MCF 10A (cell line): ENCODE measurements at regions of chr16 and their contacts with region 1.

Region 1: DNA sequence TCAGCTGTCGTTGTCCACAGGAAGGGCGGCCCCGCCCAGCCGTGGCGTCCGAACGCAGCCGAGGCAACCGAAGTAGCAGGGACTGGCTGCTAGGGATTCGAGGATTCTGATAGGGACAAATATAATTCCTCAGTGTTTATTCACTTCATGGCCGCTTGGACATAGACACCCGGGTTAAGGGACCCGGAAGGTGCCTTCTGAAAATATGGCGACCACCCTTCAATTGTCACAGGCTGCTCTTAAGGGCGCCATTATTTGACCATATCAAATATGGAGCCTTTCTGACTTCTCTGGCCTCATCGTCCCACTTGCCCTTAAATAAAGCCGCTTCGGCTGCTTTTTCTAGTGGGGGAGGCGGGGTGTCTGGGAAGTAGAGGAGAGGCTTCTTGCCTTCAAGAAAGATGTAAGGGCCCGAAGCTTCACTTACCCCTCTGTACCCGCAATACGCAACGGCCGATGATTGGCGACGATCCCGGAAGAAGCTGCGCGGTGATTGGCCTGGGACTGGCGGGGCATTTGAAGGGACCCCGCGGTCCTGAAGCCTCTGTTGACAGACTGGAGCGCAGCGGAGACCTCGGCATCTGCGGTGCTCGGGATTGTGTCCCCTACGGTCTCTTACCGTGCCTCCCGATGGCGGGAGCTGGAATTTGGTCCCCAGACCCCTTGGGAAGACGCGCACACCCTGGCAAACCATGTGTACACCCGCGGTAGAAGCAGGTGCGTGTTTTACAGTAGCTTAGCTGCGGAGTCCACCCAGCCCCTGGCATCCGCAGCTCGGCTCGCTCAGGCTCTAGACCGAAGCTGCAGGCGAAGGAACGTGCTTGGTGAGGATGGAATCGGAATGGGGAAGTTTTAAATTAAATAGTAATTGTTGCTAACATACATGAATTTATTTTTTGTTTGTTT is at the start of gene ZNF688:
- DNase-seq: peak; percentile 97
- H3K4me3 Mint-ChIP-seq: peak within 1 kb of the TSS; percentile 75
- H3K27ac Mint-ChIP-seq: peak within 1 kb of the TSS; percentile 76
- H3K4me1 Mint-ChIP-seq: peaks cover 19% of the 10 kb centered on the region
- H3K27me3 Mint-ChIP-seq: no peaks in the 10 kb centered on the region
- CTCF ChIP-seq: no peak
- total RNA-seq, gene ZNF688: 9.0 and 11.6 TPM in 2 replicates

Region 2: GRCh38 chr16:30585400-30586189 is 13.6 kb after region 1 on chr16 and contains the start of gene ZNF785:
- CTCF ChIA-PET with region 1: interaction called, 5 read pairs
- POLR2A ChIA-PET with region 1: interaction called, 45 read pairs
- intact Hi-C with region 1: loop called (anchors 1 kb)
- DNase-seq: peak; percentile 100
- H3K4me3 Mint-ChIP-seq: peak within 1 kb of the TSS; percentile 96
- H3K27ac Mint-ChIP-seq: peak within 1 kb of the TSS; percentile 78
- H3K4me1 Mint-ChIP-seq: no peaks in the 10 kb centered on the region
- H3K27me3 Mint-ChIP-seq: no peaks in the 10 kb centered on the region
- CTCF ChIP-seq: no peak
- total RNA-seq, gene ZNF785: 12.8 and 16.3 TPM in 2 replicates

Region 3: GRCh38 chr16:30609926-30610839 is 38.2 kb after region 1 on chr16 and contains the start of gene ZNF689:
- CTCF ChIA-PET with region 1: interaction called, 5 read pairs
- POLR2A ChIA-PET with region 1: interaction called, 10 read pairs
- intact Hi-C with region 1: no loop called
- DNase-seq: peak; percentile 98
- H3K4me3 Mint-ChIP-seq: peak within 1 kb of the TSS; percentile 80
- H3K27ac Mint-ChIP-seq: peak within 1 kb of the TSS; percentile 92
- H3K4me1 Mint-ChIP-seq: no peaks in the 10 kb centered on the region
- H3K27me3 Mint-ChIP-seq: no peaks in the 10 kb centered on the region
- CTCF ChIP-seq: no peak
- total RNA-seq, gene ZNF689: 4.5 and 6.1 TPM in 2 replicates

Region 4: DNA sequence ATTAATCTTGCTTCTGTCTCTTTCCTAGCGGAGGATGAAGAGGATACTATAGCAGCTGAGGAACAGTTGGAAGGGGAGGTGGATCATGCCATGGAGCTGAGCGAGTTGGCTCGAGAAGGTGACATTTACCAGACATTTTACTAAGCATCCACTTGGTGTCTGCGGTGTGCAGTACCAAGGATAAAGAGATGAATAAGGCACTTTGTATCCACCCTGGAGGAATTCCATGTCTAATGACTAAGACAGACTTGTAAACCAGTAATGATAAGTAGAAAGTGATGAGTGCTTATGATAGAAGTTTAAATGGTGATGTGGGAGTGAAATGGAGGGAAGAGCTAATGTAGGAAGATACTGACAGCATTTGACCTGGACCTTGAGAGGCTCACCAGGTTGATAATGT is 139.0 kb after region 1 on chr16:
- CTCF ChIA-PET with region 1: no interaction called
- POLR2A ChIA-PET with region 1: no interaction called
- intact Hi-C with region 1: no loop called
- DNase-seq: no peak
- H3K4me3 Mint-ChIP-seq: no peak overlapping the region
- H3K27ac Mint-ChIP-seq: no peak overlapping the region
- H3K4me1 Mint-ChIP-seq: peaks cover 32% of the 10 kb centered on the region
- H3K27me3 Mint-ChIP-seq: no peaks in the 10 kb centered on the region
- CTCF ChIP-seq: no peak